ENCODE measurements at regions of chr1 and their contacts with region 1.

Region 1: DNA sequence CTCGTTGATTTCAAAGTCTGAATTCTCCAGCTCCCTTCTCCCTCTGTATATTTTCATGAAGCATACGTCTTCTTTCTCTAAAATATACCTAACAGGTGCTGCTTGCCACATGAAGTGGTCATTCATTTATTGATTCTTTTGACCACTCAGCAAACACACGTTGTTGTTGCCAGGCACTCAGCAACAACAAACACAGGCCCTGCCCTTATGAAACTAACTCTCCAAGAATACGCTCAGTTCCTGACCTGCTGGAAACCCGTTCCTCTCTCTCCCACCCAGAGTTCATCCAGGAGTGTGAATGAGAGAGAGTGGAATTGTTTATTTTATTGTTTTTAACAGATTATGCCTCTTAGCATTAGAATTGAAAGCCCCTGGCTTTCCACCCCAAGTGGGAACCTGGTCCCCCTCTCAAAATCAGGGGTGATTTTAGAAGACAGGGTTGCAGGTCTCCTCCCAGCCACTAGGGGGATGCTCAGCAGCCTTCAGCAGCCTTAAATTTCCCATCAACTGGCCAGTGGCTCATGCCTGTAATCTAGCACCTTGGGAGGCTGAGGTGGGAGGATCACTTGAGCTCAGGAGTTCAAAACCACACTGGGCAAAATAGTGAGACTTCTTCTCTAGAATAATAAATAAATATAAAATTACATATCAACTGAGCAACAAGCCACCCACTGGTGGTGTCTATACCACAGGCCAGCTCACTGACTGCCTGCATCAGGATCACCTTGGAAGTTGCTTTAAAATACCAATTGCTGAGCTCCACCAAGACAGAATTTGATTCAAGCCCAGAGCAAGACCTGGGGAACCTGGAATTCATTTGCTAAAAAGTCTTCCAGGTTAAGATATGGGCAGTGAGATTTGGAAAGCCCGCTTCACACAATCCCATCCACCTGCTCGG is 181.0 kb upstream of the KLHDC7A start:
- DNase-seq: no peak
- ATAC-seq: peak; percentile 77
- H3K4me3 ChIP-seq: no peak overlapping the region
- H3K27ac ChIP-seq: no peak overlapping the region
- H3K4me1 ChIP-seq: no peaks in the 10 kb centered on the region
- H3K27me3 ChIP-seq: 0 out of 4 replicates have a peak, but pooled peaks cover 0 to 2% of the 10 kb centered on the region in 2 experiments
- CTCF ChIP-seq: peak; percentile 63 to 83 (median 79)
- EP300 ChIP-seq: no peak
- POLR2A ChIP-seq: no peak
- RAD21 ChIP-seq: peak; percentile 44; the same call in 1 of the 2 replicates

Region 2: GRCh38 chr1:17922833-17923232 is 376.9 kb before region 1 on chr1:
- CTCF ChIA-PET with region 1: interaction called, 8 read pairs
- POLR2A ChIA-PET with region 1: no interaction called
- RAD21 ChIA-PET with region 1: interaction called, 6 read pairs
- SMC1A ChIA-PET with region 1: interaction called, 3 read pairs
- in situ Hi-C with region 1: no loop called
- intact Hi-C with region 1: loop called (anchors 5 kb)
- DNase-seq: no peak
- ATAC-seq: no peak
- H3K4me3 ChIP-seq: no peak overlapping the region
- H3K27ac ChIP-seq: no peak overlapping the region
- H3K4me1 ChIP-seq: no peaks in the 10 kb centered on the region
- H3K27me3 ChIP-seq: no peaks in the 10 kb centered on the region
- CTCF ChIP-seq: peak; percentile 50 to 60 (median 52)
- EP300 ChIP-seq: no peak
- POLR2A ChIP-seq: no peak
- RAD21 ChIP-seq: peak; percentile 60

Region 3: GRCh38 chr1:18100491-18101063 is 199.1 kb before region 1 on chr1:
- CTCF ChIA-PET with region 1: interaction called, 12 read pairs
- POLR2A ChIA-PET with region 1: no interaction called
- RAD21 ChIA-PET with region 1: interaction called, 4 read pairs
- SMC1A ChIA-PET with region 1: no interaction called
- in situ Hi-C with region 1: no loop called
- intact Hi-C with region 1: no loop called
- DNase-seq: peak; percentile 5
- ATAC-seq: peak; percentile 48
- H3K4me3 ChIP-seq: no peak overlapping the region
- H3K27ac ChIP-seq: no peak overlapping the region
- H3K4me1 ChIP-seq: no peaks in the 10 kb centered on the region
- H3K27me3 ChIP-seq: peaks cover 0 to under 1% of the 10 kb centered on the region in 2 experiments; a peak in 2 of 4 replicates
- CTCF ChIP-seq: peak; percentile 72 to 85 (median 73)
- EP300 ChIP-seq: no peak
- POLR2A ChIP-seq: no peak
- RAD21 ChIP-seq: peak; percentile 56; the same call in 1 of the 2 replicates

Region 4: DNA sequence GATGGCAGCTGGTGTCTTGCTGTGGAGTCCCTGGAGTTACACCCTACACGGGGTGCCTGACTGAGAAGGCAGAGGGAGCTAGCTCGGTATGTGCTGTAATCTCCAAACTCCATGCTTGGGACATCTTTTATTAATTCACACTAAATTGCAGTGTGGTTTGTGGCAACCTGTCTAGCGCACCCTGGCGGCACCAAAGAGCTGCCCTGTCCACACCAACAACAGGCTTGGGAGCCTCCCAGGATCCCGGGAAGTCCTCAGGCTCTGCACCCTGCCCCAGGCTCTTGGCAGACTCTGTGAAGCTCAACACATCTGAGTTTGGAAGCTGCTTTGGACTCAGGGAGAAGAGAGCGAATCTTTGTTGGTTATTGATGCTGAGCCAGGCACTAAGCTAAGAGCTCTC is 53.1 kb before region 1 on chr1:
- CTCF ChIA-PET with region 1: interaction called, 12 read pairs
- POLR2A ChIA-PET with region 1: no interaction called
- RAD21 ChIA-PET with region 1: interaction called, 3 read pairs
- SMC1A ChIA-PET with region 1: interaction called, 4 read pairs
- in situ Hi-C with region 1: no loop called
- intact Hi-C with region 1: no loop called
- DNase-seq: no peak
- ATAC-seq: no peak
- H3K4me3 ChIP-seq: no peak overlapping the region
- H3K27ac ChIP-seq: no peak overlapping the region
- H3K4me1 ChIP-seq: no peaks in the 10 kb centered on the region
- H3K27me3 ChIP-seq: no peaks in the 10 kb centered on the region; a peak in 1 of 4 replicates
- CTCF ChIP-seq: peak in 1 of 3 experiments; percentile 15; a peak in 2 of 6 replicates
- EP300 ChIP-seq: no peak
- POLR2A ChIP-seq: no peak
- RAD21 ChIP-seq: no peak

Region 5: DNA sequence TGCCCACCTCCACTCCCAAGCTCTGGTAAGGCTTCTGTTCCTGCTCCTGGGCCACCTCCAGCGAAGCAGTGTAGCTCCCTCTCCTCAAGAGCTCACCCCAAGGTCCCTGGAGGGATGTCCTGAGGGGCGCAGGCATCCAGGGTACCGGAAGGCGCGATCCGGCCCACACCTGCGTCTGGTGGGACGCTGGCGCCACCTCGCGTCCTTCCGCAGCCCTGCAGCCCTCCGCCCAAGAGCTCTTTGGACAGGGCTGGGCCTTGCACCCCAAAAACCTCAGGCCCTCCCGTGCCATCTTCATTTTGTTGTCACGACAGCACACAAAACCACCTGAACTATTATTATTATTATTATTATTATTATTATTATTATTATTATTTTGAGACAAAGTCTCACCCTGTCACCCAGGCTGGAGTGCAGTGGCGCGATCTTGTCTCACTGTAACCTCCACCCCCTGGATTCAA is 281.8 kb after region 1 on chr1:
- CTCF ChIA-PET with region 1: interaction called, 13 read pairs
- POLR2A ChIA-PET with region 1: no interaction called
- RAD21 ChIA-PET with region 1: interaction called, 3 read pairs
- SMC1A ChIA-PET with region 1: interaction called, 3 read pairs
- in situ Hi-C with region 1: no loop called
- intact Hi-C with region 1: no loop called
- DNase-seq: no peak
- ATAC-seq: peak; percentile 87
- H3K4me3 ChIP-seq: no peak overlapping the region
- H3K27ac ChIP-seq: no peak overlapping the region
- H3K4me1 ChIP-seq: no peaks in the 10 kb centered on the region
- H3K27me3 ChIP-seq: no peaks in the 10 kb centered on the region
- CTCF ChIP-seq: peak; percentile 74 to 92 (median 81)
- EP300 ChIP-seq: no peak
- POLR2A ChIP-seq: no peak
- RAD21 ChIP-seq: peak; percentile 75